ENCODE measurements at regions of chr11 and their contacts with region 1.

Region 1: GRCh38 chr11:111694851-111695250 is 71.3 kb downstream of the PPP2R1B start:
- DNase-seq: peak; percentile 90
- H3K4me3 ChIP-seq: no peak overlapping the region
- CTCF ChIP-seq: no peak

Region 2: GRCh38 chr11:111604392-111605009 is 90.3 kb before region 1 on chr11:
- in situ Hi-C with region 1: loop called (anchors 5 kb)
- DNase-seq: peak; percentile 42
- H3K4me3 ChIP-seq: peak overlapping the region; percentile 88
- CTCF ChIP-seq: peak; percentile 61